Activated naive CD4-positive, alpha-beta T cell treated with anti-CD3 and anti-CD28 coated beads for 36 hours (primary cell): ENCODE measurements at regions of chr2 and their contacts with region 1.

Region 1: DNA sequence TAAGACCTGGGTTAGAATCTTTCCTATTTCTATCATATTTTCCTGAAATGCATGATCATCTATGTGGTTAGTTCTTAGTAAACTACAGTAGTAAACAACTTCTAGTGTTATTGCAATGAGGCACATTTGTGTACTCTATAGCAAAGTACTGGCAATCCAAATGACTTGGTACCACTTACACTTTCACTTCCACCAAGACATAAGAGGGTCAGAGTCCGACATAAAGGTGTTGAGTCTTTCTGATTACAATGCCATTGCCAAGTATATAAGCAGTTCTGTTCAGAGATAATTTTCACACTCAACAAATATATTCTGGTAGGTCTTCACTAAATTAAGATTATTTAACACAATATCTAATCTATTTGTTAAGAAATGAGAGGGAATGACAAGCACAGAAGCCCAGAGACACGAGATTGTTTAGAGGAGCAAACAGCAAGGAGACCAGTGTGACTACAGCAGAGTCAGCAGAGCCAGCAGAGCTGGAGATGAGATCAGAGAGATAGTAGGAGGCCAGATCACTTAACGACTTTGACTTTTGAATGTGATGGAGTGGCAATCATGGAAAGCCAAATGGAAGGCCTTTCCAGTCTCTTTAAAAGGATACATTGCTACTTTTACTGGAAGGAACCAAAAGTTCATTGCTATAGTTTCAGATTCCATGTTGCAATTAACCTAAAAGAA is 27.5 kb downstream of the SOS1 start:
- DNase-seq: no peak
- H3K4me3 Mint-ChIP-seq: no peak overlapping the region
- H3K27ac Mint-ChIP-seq: no peak overlapping the region
- H3K4me1 Mint-ChIP-seq: peaks cover 29% of the 10 kb centered on the region
- H3K27me3 Mint-ChIP-seq: no peaks in the 10 kb centered on the region

Region 2: GRCh38 chr2:39080152-39080551 is 13.2 kb before region 1 on chr2:
- CTCF ChIA-PET with region 1: interaction called, 3 read pairs
- intact Hi-C with region 1: loop called (anchors 2 kb)
- DNase-seq: no peak
- H3K4me3 Mint-ChIP-seq: no peak overlapping the region
- H3K27ac Mint-ChIP-seq: no peak overlapping the region
- H3K4me1 Mint-ChIP-seq: peaks cover 25% of the 10 kb centered on the region
- H3K27me3 Mint-ChIP-seq: no peaks in the 10 kb centered on the region